ENCODE measurements at regions of chr12 and their contacts with region 1.

Region 1: DNA sequence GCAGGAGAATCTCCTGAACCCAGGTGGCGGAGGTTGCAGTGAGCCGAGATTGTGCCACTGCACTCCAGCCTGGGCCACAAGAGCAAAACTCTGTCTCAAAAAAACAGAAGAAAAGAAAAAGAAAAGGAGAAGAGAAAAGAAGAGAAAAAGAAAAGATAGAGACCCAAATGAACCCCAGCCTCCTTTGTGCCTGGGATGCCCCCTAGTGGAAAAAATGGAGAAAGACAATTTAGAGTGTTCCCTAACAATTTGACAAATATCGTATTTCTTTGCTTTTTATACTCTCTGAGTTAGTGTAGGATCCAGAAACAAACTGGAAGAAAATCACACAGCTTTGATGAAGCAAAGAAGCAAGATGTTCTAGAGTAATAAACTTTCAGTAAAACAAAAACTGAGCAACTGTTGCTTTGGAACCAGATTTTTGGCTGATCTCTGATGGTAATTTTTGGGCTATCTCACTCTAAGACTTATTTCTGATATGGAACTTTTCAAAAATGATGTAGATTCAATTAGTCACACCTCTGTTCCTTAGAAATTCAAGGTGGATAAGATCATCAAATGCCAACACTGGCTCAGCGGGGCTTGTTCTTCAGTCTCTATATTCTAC is 18.6 kb upstream of the PRKAB1 start:
- DNase-seq: peak; percentile 51 to 61 (median 59)
- ATAC-seq: peak; percentile 76
- H3K4me3 ChIP-seq: no peak overlapping the region
- H3K27ac ChIP-seq: no peak overlapping the region
- H3K4me1 ChIP-seq: no peaks in the 10 kb centered on the region
- H3K27me3 ChIP-seq: peaks cover 5 to 7% of the 10 kb centered on the region in 2 experiments; a peak in 1 of 5 replicates
- CTCF ChIP-seq: peak; percentile 57 to 92 (median 73); a peak in 5 of 6 replicates
- EP300 ChIP-seq: no peak
- POLR2A ChIP-seq: no peak
- RAD21 ChIP-seq: peak; percentile 65 to 82

Region 2: DNA sequence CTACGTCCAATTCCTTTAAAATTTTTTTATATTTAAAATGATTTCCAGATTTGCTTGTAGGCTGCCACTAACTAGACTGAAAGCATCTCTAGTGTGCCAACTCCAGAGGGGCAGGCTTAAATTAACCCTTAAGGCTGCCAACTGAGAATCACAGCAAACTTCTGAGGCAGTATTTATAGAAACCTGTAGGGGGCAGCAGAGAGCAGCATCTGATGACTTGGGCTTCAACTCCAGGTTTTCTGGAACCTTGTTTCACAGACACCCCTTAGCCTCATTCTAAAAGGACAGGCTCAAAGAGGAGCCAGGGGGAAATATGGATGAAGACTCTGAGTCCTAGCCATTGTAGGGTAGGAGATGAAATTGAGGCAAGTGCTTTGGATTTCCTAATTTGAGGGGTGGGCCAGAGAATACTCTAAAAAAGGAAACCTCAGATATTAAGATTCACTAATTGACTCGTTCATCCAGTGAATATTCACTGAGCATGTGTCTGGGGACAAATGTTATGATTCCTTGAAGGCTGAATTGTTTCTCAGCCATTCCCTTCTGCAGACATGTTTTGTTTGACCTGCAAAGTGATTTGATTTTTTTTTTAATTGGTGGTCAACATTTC is 533.9 kb before region 1 on chr12:
- CTCF ChIA-PET with region 1: no interaction called
- POLR2A ChIA-PET with region 1: no interaction called
- in situ Hi-C with region 1: no loop called
- intact Hi-C with region 1: loop called (anchors 10 kb)
- DNase-seq: peak; percentile 53 to 75 (median 67)
- ATAC-seq: peak; percentile 67; the same call in 1 of the 3 replicates
- H3K4me3 ChIP-seq: no peak overlapping the region
- H3K27ac ChIP-seq: no peak overlapping the region
- H3K4me1 ChIP-seq: no peaks in the 10 kb centered on the region
- H3K27me3 ChIP-seq: no peaks in the 10 kb centered on the region
- CTCF ChIP-seq: peak; percentile 72 to 75 (median 73)
- EP300 ChIP-seq: no peak
- POLR2A ChIP-seq: no peak
- RAD21 ChIP-seq: peak; percentile 28 to 55; a peak in 3 of 4 replicates

Region 3: DNA sequence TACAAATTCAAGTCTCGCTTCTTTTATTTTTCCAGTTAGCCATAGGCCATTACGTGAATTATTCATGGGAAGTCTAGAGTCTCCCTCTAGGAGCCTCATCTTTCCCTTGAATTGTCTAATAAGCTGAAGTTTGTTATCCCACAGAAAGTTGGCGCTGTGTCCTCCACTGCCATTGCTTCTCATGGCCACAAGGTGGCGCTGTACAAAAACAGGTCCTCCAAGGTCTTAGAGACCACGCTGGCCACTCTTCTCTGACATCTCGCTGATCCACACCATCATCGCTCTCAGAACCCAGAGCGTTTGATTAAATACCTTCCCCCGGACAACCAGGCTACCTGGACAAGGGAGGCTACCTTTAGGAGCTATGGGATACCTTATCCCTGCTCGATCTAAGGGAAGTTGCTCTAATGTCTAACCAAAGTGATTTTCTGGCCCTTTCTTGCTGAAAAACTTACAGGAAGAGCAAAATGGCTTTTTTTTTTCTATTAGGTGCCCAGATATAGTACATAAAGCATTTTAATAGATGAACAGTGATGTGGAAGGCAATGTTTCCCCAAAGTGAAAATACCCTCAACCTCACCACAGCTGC is 204.8 kb before region 1 on chr12:
- CTCF ChIA-PET with region 1: interaction called, 15 read pairs
- POLR2A ChIA-PET with region 1: no interaction called
- in situ Hi-C with region 1: no loop called
- intact Hi-C with region 1: loop called (anchors 1 kb)
- DNase-seq: peak; percentile 72 to 82 (median 80)
- ATAC-seq: peak; percentile 95
- H3K4me3 ChIP-seq: no peak overlapping the region
- H3K27ac ChIP-seq: no peak overlapping the region
- H3K4me1 ChIP-seq: no peaks in the 10 kb centered on the region
- H3K27me3 ChIP-seq: no peaks in the 10 kb centered on the region
- CTCF ChIP-seq: peak; percentile 99 to 100 (median 100)
- EP300 ChIP-seq: no peak
- POLR2A ChIP-seq: no peak
- RAD21 ChIP-seq: peak; percentile 64 to 79

Region 4: GRCh38 chr12:119544765-119545625 is 104.3 kb before region 1 on chr12:
- CTCF ChIA-PET with region 1: no interaction called
- POLR2A ChIA-PET with region 1: no interaction called
- in situ Hi-C with region 1: no loop called
- intact Hi-C with region 1: loop called (anchors 1 kb)
- DNase-seq: peak; percentile 74 to 85 (median 82)
- ATAC-seq: peak; percentile 92
- H3K4me3 ChIP-seq: no peak overlapping the region
- H3K27ac ChIP-seq: no peak overlapping the region
- H3K4me1 ChIP-seq: no peaks in the 10 kb centered on the region
- H3K27me3 ChIP-seq: no peaks in the 10 kb centered on the region
- CTCF ChIP-seq: peak; percentile 75 to 88 (median 84)
- EP300 ChIP-seq: no peak
- POLR2A ChIP-seq: no peak
- RAD21 ChIP-seq: peak; percentile 71 to 82

Region 5: GRCh38 chr12:119742700-119743099 is 93.4 kb after region 1 on chr12:
- CTCF ChIA-PET with region 1: no interaction called
- POLR2A ChIA-PET with region 1: no interaction called
- in situ Hi-C with region 1: no loop called
- intact Hi-C with region 1: no loop called
- DNase-seq: no peak
- ATAC-seq: no peak
- H3K4me3 ChIP-seq: no peak overlapping the region
- H3K27ac ChIP-seq: no peak overlapping the region
- H3K4me1 ChIP-seq: no peaks in the 10 kb centered on the region
- H3K27me3 ChIP-seq: no peaks in the 10 kb centered on the region
- CTCF ChIP-seq: no peak
- EP300 ChIP-seq: no peak
- POLR2A ChIP-seq: no peak
- RAD21 ChIP-seq: no peak

Measured in K562 (cell line).